ENCODE measurements at regions of chr17 and their contacts with region 1.

Region 1: DNA sequence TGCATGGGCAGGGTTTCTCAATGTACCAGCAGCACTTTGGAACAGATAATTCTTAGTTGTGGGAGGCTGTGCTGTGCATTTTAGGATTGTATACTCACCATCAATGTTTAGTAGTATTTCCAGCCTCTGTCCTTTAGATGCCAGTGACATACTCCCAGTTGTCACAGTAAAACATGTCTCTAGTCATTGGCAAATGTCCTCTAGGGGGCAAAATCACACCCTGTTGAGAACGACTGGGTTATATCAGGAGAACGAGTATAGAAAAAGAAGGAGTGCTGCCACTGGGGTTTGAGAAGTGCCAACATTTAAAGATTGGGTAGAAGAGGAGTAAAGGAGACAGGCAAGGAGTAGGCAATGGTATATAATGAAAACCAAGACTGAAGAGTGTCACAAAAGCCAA is 37.9 kb upstream of the SMIM36 start:
- DNase-seq: peak; percentile 39
- H3K4me3 Mint-ChIP-seq: no peak overlapping the region
- H3K27ac Mint-ChIP-seq: no peak overlapping the region
- H3K4me1 Mint-ChIP-seq: peaks cover 11% of the 10 kb centered on the region
- H3K27me3 Mint-ChIP-seq: peaks cover 3% of the 10 kb centered on the region

Region 2: GRCh38 chr17:55588446-55589242 is 39.5 kb after region 1 on chr17:
- CTCF ChIA-PET with region 1: no interaction called
- intact Hi-C with region 1: loop called (anchors 1 kb)
- DNase-seq: no peak
- H3K4me3 Mint-ChIP-seq: no peak overlapping the region
- H3K27ac Mint-ChIP-seq: no peak overlapping the region
- H3K4me1 Mint-ChIP-seq: peaks cover 10% of the 10 kb centered on the region
- H3K27me3 Mint-ChIP-seq: no peaks in the 10 kb centered on the region

Region 3: GRCh38 chr17:55770148-55770870 is 221.2 kb after region 1 on chr17:
- CTCF ChIA-PET with region 1: no interaction called
- intact Hi-C with region 1: loop called (anchors 1 kb)
- DNase-seq: no peak
- H3K4me3 Mint-ChIP-seq: no peak overlapping the region
- H3K27ac Mint-ChIP-seq: no peak overlapping the region
- H3K4me1 Mint-ChIP-seq: no peaks in the 10 kb centered on the region
- H3K27me3 Mint-ChIP-seq: no peaks in the 10 kb centered on the region

Region 4: GRCh38 chr17:55825213-55825612 is 276.1 kb after region 1 on chr17:
- CTCF ChIA-PET with region 1: no interaction called
- intact Hi-C with region 1: loop called (anchors 1 kb)
- DNase-seq: peak; percentile 18
- H3K4me3 Mint-ChIP-seq: no peak overlapping the region
- H3K27ac Mint-ChIP-seq: no peak overlapping the region
- H3K4me1 Mint-ChIP-seq: no peaks in the 10 kb centered on the region
- H3K27me3 Mint-ChIP-seq: peaks cover 8% of the 10 kb centered on the region